ENCODE measurements at regions of chr2 and their contacts with region 1.

Region 1: DNA sequence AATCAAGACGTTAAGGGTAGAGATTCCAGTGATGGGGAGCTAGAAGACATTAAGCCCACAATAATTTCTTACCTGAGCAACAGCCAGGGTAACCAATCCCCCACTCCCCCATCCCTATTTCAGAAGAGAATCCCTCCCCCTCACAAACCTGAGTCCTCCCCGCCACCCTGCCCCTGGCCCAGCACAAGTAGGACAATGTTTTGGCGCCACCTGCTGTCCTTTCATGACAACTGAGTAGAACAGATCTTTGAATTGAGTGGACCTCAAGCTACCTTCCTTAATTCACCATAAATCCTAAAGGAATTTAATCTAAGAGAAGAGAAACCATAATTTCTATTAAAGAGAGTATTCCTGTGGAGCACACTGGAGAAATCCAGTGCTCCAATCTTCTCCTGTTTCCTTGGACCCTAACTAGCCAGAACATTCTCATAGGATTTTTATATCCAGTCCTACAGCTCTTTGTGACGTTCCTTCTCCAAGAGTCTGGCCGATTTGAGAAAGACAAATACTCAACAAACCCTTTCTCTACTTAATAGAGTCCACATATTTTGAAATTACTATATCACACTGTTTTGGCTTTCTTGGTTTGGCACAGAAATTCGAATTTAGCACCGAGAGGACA is 41.1 kb downstream of the NHEJ1 start:
- DNase-seq: peak; percentile 45 to 62
- ATAC-seq: peak; percentile 83 to 96
- H3K4me3 ChIP-seq: no peak overlapping the region
- H3K27ac ChIP-seq: no peak overlapping the region
- H3K4me1 ChIP-seq: peaks cover 7% of the 10 kb centered on the region
- CTCF ChIP-seq: peak; percentile 83
- EP300 ChIP-seq: no peak
- POLR2A ChIP-seq: no peak
- RAD21 ChIP-seq: peak; percentile 81 to 84

Region 2: DNA sequence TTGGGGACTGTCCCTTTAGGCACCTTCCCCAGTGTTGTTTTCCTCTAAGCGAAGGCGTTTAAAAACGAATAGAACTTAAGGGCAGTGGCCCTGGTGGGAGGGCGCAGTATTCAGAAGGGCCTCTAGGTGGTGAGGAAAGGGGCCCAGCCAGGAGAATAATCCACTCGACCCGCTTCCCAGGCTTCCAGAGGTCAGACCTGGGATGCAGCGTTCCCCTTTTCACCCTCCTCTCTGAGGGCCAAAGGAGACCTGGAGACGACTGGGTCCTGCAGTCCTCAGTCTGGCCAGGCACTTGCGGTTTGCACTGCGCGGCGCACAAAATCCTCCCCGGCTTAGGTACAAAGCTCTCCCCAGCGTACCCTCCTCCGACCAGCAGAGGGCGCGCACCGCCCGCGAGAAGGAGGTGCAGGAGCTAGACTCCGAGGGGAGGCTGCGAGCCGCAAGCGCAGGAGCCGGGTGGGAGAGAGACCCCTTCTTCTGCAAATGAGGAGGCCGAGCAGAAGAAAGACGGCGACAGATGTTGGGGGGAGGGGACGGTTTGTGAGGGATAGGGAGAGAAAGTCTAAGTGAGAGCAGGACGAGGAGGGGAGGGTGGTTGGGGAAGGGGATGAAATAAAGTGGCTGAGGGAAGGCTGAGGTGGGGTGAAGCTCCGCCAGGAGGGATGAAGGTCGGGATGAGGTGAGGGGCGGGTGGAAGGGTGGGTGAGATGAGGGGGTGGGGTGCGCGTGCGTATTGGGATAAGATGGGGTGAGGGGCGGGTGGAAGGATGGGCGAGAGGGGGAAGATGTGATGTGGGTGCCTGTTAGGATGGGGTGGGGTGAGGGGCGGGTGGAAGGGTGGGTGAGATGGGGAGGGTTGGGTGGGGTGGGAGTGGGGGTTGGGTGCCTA is 139.4 kb before region 1 on chr2:
- CTCF ChIA-PET with region 1: interaction called, 40 read pairs
- POLR2A ChIA-PET with region 1: no interaction called
- DNase-seq: peak; percentile 79 to 89
- ATAC-seq: peak; percentile 87 to 96
- H3K4me3 ChIP-seq: peak overlapping the region; percentile 16
- H3K27ac ChIP-seq: peak overlapping the region; percentile 26 to 75; a peak in 4 of 6 replicates
- H3K4me1 ChIP-seq: peaks cover 18% of the 10 kb centered on the region
- CTCF ChIP-seq: peak; percentile 97
- EP300 ChIP-seq: no peak
- POLR2A ChIP-seq: no peak
- RAD21 ChIP-seq: peak; percentile 73 to 76

Region 3: GRCh38 chr2:219065484-219065883 is 54.0 kb before region 1 on chr2:
- CTCF ChIA-PET with region 1: interaction called, 123 read pairs
- POLR2A ChIA-PET with region 1: no interaction called
- DNase-seq: no peak
- ATAC-seq: no peak
- H3K4me3 ChIP-seq: no peak overlapping the region
- H3K27ac ChIP-seq: no peak overlapping the region
- H3K4me1 ChIP-seq: peaks cover 1% of the 10 kb centered on the region; the same call in 2 of the 3 replicates
- CTCF ChIP-seq: no peak
- EP300 ChIP-seq: no peak
- POLR2A ChIP-seq: no peak
- RAD21 ChIP-seq: no peak

Region 4: DNA sequence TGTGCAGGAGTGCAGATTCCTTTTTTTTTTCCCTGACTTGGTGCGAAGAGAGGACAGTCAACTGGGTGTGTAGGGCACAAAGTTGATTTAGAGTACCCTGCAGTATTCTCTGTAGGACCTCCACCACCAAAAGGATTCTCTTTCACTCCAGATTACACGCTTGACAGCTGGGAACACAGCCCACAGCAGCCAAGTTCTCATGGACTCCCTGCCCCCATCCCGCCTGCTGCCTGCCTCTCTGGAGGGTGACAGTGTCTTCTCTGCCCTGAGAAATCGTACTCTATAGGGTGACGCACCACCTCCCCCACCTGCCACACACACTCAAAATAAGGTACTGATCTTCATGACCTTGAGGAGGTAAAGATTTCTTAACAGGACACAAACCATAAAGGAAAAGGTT is 32.2 kb before region 1 on chr2:
- CTCF ChIA-PET with region 1: interaction called, 10 read pairs
- POLR2A ChIA-PET with region 1: no interaction called
- DNase-seq: no peak
- ATAC-seq: no peak
- H3K4me3 ChIP-seq: no peak overlapping the region
- H3K27ac ChIP-seq: no peak overlapping the region
- H3K4me1 ChIP-seq: no peaks in the 10 kb centered on the region
- CTCF ChIP-seq: no peak
- EP300 ChIP-seq: no peak
- POLR2A ChIP-seq: no peak
- RAD21 ChIP-seq: no peak

Region 5: DNA sequence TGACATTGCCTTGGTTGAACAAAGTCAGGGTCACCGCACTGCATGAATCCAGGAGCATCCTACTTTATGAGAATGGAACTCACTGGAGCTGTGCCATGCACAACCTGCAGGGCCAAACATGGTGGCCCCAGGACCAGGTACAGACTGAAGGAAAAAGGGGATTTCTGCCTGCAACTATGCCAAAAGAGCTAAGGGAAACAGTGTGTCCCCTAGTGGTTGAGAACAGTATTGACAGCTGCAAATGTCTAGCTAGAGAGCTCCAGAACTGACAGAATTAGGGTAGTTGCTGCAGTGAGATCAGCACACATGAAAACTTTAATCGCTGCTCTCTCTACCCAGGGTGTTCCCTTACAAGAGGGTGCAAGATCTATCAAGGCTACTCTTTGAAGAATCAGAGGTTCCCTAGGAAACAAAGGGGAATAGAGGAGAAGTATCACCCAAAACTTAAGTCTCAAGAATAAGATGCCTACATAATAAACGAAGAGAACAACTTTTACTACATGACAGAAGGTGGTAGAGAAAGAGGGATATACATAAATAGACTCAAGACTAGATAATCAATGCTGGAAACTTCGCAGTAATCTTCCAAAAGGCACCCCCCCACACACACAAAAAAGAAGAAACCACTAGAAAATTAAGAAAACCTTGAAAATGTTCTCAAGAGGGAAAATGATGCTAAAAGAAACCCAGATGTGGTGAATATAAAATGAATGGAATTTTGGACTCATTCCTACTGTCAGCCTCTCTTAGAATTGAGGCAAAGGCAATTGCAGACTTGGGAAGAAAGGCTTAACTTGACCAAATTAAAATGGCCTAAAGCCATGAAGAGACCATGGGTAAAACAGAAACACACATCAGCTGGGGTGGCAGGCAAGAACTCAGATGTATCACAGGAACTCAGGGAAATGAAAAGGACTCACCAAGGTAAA is 15.2 kb before region 1 on chr2:
- CTCF ChIA-PET with region 1: interaction called, 20 read pairs
- POLR2A ChIA-PET with region 1: no interaction called
- DNase-seq: peak; percentile 28 to 60
- ATAC-seq: peak; percentile 88 to 95
- H3K4me3 ChIP-seq: no peak overlapping the region
- H3K27ac ChIP-seq: no peak overlapping the region
- H3K4me1 ChIP-seq: no peaks in the 10 kb centered on the region
- CTCF ChIP-seq: peak; percentile 64
- EP300 ChIP-seq: no peak
- POLR2A ChIP-seq: no peak
- RAD21 ChIP-seq: peak; percentile 41 to 47; a peak in 4 of 5 replicates

Region 6: DNA sequence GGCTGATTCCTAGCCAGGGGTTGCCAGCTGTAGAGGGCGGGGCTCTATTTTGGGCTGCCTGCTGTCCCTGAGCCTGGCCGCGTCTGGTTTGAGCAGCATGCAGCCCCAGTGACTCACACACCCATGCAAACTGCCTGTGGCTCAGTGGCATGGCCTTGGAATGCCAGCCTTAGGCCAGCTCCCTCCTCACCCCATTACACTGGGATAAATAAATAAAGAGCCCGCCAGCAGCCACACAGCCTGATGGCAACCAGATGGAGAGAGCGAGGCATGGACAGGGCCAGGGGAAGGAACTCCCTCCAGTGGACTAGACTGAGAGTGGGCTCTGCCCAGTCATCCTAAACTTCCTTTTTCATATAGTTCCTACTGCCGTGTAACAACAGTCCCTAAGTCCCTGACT is 22.8 kb after region 1 on chr2:
- CTCF ChIA-PET with region 1: interaction called, 26 read pairs
- POLR2A ChIA-PET with region 1: no interaction called
- DNase-seq: no peak
- ATAC-seq: peak; percentile 68 to 70; a peak in 4 of 6 replicates
- H3K4me3 ChIP-seq: no peak overlapping the region
- H3K27ac ChIP-seq: no peak overlapping the region
- H3K4me1 ChIP-seq: peaks cover 5% of the 10 kb centered on the region; the same call in 1 of the 3 replicates
- CTCF ChIP-seq: no peak
- EP300 ChIP-seq: no peak
- POLR2A ChIP-seq: no peak
- RAD21 ChIP-seq: no peak

Measured in A549 (cell line).